MCF 10A (cell line): ENCODE measurements at regions of chr12 and their contacts with region 1.

Region 1: GRCh38 chr12:127230843-127231260 is 1036.1 kb upstream of the TMEM132C start:
- DNase-seq: peak; percentile 91
- H3K4me3 Mint-ChIP-seq: no peak overlapping the region
- H3K27ac Mint-ChIP-seq: peak overlapping the region; percentile 80
- H3K4me1 Mint-ChIP-seq: peaks cover 12% of the 10 kb centered on the region
- H3K27me3 Mint-ChIP-seq: no peaks in the 10 kb centered on the region
- CTCF ChIP-seq: no peak

Region 2: GRCh38 chr12:127241072-127241817 is 10.4 kb after region 1 on chr12:
- CTCF ChIA-PET with region 1: interaction called, 3 read pairs
- POLR2A ChIA-PET with region 1: interaction called, 26 read pairs
- intact Hi-C with region 1: no loop called
- DNase-seq: peak; percentile 76
- H3K4me3 Mint-ChIP-seq: peak overlapping the region; percentile 26
- H3K27ac Mint-ChIP-seq: no peak overlapping the region
- H3K4me1 Mint-ChIP-seq: peaks cover 58% of the 10 kb centered on the region
- H3K27me3 Mint-ChIP-seq: no peaks in the 10 kb centered on the region
- CTCF ChIP-seq: no peak

Region 3: DNA sequence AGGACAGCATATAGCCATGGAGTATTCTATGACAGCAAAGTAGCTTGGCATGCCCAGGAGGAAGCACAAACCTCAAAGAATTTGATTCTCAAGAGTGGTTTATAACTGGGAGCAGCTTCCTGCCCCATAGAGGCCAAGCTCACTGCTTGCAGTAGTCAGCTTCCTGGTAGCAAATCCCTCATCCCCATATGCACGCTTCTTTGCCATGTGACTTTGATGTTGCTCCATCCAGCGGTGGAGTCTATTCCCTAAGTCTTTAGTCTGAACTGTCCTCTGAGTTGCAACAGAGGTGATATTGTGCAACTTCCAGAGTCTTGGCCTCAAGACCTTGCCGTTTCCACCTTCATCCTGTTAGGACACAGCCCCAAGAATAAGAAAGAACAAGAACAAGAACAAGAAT is 39.3 kb after region 1 on chr12:
- CTCF ChIA-PET with region 1: interaction called, 3 read pairs
- POLR2A ChIA-PET with region 1: interaction called, 5 read pairs
- intact Hi-C with region 1: loop called (anchors 5 kb)
- DNase-seq: peak; percentile 98
- H3K4me3 Mint-ChIP-seq: peak overlapping the region; percentile 1
- H3K27ac Mint-ChIP-seq: peak overlapping the region; percentile 1
- H3K4me1 Mint-ChIP-seq: peaks cover 27% of the 10 kb centered on the region
- H3K27me3 Mint-ChIP-seq: no peaks in the 10 kb centered on the region
- CTCF ChIP-seq: no peak

Region 4: GRCh38 chr12:127280393-127281275 is 49.8 kb after region 1 on chr12:
- CTCF ChIA-PET with region 1: interaction called, 3 read pairs
- POLR2A ChIA-PET with region 1: no interaction called
- intact Hi-C with region 1: loop called (anchors 5 kb)
- DNase-seq: no peak
- H3K4me3 Mint-ChIP-seq: no peak overlapping the region
- H3K27ac Mint-ChIP-seq: no peak overlapping the region
- H3K4me1 Mint-ChIP-seq: peaks cover 11% of the 10 kb centered on the region
- H3K27me3 Mint-ChIP-seq: no peaks in the 10 kb centered on the region
- CTCF ChIP-seq: peak; percentile 48

Region 5: GRCh38 chr12:128408669-128409068 is 1177.8 kb after region 1 on chr12:
- CTCF ChIA-PET with region 1: no interaction called
- POLR2A ChIA-PET with region 1: no interaction called
- intact Hi-C with region 1: no loop called
- DNase-seq: no peak
- H3K4me3 Mint-ChIP-seq: no peak overlapping the region
- H3K27ac Mint-ChIP-seq: no peak overlapping the region
- H3K4me1 Mint-ChIP-seq: no peaks in the 10 kb centered on the region
- H3K27me3 Mint-ChIP-seq: no peaks in the 10 kb centered on the region
- CTCF ChIP-seq: no peak